ENCODE measurements at regions of chr5 and their contacts with region 1.

Region 1: DNA sequence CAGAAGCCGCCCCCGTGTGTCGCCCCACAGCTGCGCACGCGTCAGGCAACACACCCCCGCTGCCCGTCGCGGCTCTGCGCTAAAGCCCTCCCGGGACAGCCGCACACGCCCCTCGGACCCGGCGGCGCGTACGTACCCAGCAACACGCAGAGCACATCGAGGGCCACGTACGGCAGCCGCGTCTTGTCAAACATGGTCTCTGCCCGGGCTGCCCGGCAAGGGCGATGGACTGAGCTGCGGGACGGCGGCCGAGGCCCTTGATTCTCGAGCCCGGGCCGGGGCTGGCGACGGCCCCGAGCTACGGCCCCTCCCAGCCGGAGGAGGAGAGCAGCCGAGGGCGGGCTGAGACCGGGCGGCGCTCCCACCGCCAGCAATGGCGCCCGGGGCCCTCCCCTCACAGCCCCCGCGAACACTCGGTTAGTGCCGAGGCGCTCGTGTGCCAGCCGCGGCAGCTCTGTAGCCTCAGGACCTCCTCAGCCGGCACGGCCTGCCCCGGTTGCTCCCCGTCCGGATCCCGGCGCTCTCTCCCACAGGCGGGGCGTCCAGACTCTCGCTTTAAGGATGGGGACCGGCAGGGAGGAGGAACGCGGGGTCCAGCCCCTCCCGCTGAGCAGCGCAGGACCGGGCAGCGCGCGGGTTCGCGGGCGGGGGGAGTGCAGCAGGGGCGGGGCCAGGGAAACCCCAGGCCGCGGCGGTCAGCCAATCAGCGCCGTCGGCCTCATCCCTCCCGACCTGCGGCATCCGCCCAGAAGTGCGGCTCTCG is at the start of gene PLPP1:
- DNase-seq: peak; percentile 89
- H3K4me3 Mint-ChIP-seq: peak within 1 kb of the TSS; percentile 85
- H3K27ac Mint-ChIP-seq: peak within 1 kb of the TSS; percentile 77
- H3K4me1 Mint-ChIP-seq: peaks cover 24% of the 10 kb centered on the region
- H3K27me3 Mint-ChIP-seq: no peaks in the 10 kb centered on the region
- total RNA-seq, gene PLPP1: 6.7 to 7.2 TPM

Region 2: GRCh38 chr5:55498457-55498856 is 36.2 kb before region 1 on chr5:
- CTCF ChIA-PET with region 1: no interaction called
- POLR2A ChIA-PET with region 1: no interaction called
- intact Hi-C with region 1: no loop called
- DNase-seq: no peak
- H3K4me3 Mint-ChIP-seq: no peak overlapping the region
- H3K27ac Mint-ChIP-seq: no peak overlapping the region
- H3K4me1 Mint-ChIP-seq: no peaks in the 10 kb centered on the region
- H3K27me3 Mint-ChIP-seq: no peaks in the 10 kb centered on the region

Region 3: GRCh38 chr5:55604611-55605067 is 70.0 kb after region 1 on chr5:
- CTCF ChIA-PET with region 1: no interaction called
- POLR2A ChIA-PET with region 1: no interaction called
- intact Hi-C with region 1: loop called (anchors 5 kb)
- DNase-seq: no peak
- H3K4me3 Mint-ChIP-seq: no peak overlapping the region
- H3K27ac Mint-ChIP-seq: no peak overlapping the region
- H3K4me1 Mint-ChIP-seq: peaks cover 21% of the 10 kb centered on the region
- H3K27me3 Mint-ChIP-seq: no peaks in the 10 kb centered on the region